ENCODE measurements at regions of chr21 and their contacts with region 1.

Region 1: GRCh38 chr21:30882866-30883597 is 1.7 kb upstream of the KRTAP11-1 start:
- DNase-seq: no peak
- ATAC-seq: no peak
- H3K4me3 ChIP-seq: no peak overlapping the region
- H3K27ac ChIP-seq: no peak overlapping the region
- H3K4me1 ChIP-seq: no peaks in the 10 kb centered on the region
- H3K27me3 ChIP-seq: no peaks in the 10 kb centered on the region
- CTCF ChIP-seq: no peak
- POLR2A ChIP-seq: no peak
- RAD21 ChIP-seq: no peak

Region 2: DNA sequence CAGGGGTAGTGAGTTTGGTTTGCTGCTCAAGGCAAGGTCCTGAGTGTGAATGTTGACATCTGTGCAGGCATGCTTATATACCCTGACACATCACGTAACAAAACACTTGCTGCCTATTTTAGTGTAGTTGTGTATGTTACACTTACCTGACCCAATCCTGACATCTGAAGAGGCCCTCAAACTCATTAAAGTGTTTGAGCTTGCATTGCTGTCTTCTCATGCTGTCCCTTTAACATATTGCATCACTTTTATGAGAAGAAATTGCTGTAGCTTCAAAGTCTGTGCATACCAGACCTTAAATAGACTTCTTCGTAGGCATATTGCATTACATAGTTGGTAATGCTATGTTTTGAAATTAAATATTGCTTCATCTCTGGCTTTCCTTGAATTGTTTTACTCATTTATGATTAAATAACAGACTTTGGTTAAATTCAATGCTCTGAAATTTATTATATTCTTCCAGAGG is 391.0 kb before region 1 on chr21 and contains the start of gene KRTAP19-3:
- CTCF ChIA-PET with region 1: no interaction called
- POLR2A ChIA-PET with region 1: no interaction called
- dilution Hi-C with region 1: no loop called
- in situ Hi-C with region 1: no loop called
- intact Hi-C with region 1: no loop called
- DNase-seq: no peak
- ATAC-seq: no peak
- H3K4me3 ChIP-seq: no peak within 1 kb of the TSS
- H3K27ac ChIP-seq: no peak within 1 kb of the TSS
- H3K4me1 ChIP-seq: no peaks in the 10 kb centered on the region
- H3K27me3 ChIP-seq: no peaks in the 10 kb centered on the region
- CTCF ChIP-seq: no peak
- POLR2A ChIP-seq: no peak
- RAD21 ChIP-seq: no peak
- total RNA-seq, gene KRTAP19-3: not detected in 2 replicates

Region 3: DNA sequence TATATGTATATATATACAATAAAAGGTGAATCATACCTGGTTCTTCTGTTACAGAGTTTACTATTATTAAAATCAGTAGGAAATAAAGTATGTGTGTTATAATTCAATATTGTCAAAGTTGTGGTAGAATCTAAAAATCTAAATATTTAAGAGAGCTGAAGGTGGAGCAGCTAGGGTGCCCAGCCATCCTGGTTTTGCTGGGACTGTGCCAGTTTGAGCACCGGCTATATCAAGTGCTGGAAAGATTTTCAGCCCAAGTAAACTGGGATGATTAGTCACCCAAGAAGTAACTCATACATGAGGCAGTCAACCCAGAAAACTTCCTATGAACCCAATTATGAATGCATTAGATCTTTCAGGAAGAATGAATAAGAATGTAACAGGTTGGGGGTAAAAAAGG is 364.2 kb before region 1 on chr21:
- CTCF ChIA-PET with region 1: interaction called, 10 read pairs
- POLR2A ChIA-PET with region 1: no interaction called
- dilution Hi-C with region 1: no loop called
- in situ Hi-C with region 1: no loop called
- intact Hi-C with region 1: no loop called
- DNase-seq: no peak
- ATAC-seq: no peak
- H3K4me3 ChIP-seq: no peak overlapping the region
- H3K27ac ChIP-seq: no peak overlapping the region
- H3K4me1 ChIP-seq: no peaks in the 10 kb centered on the region
- H3K27me3 ChIP-seq: no peaks in the 10 kb centered on the region
- CTCF ChIP-seq: no peak
- POLR2A ChIP-seq: no peak
- RAD21 ChIP-seq: no peak

Region 4: GRCh38 chr21:30839304-30839703 is 43.7 kb before region 1 on chr21:
- CTCF ChIA-PET with region 1: no interaction called
- POLR2A ChIA-PET with region 1: no interaction called
- dilution Hi-C with region 1: no loop called
- in situ Hi-C with region 1: no loop called
- intact Hi-C with region 1: no loop called
- DNase-seq: no peak
- ATAC-seq: no peak
- H3K4me3 ChIP-seq: no peak overlapping the region
- H3K27ac ChIP-seq: no peak overlapping the region
- H3K4me1 ChIP-seq: no peaks in the 10 kb centered on the region
- H3K27me3 ChIP-seq: no peaks in the 10 kb centered on the region
- CTCF ChIP-seq: no peak
- POLR2A ChIP-seq: no peak
- RAD21 ChIP-seq: no peak

Measured in IMR-90 (cell line).